CD14-positive monocyte (primary cell): ENCODE measurements at regions of chr6 and their contacts with region 1.

Region 1: DNA sequence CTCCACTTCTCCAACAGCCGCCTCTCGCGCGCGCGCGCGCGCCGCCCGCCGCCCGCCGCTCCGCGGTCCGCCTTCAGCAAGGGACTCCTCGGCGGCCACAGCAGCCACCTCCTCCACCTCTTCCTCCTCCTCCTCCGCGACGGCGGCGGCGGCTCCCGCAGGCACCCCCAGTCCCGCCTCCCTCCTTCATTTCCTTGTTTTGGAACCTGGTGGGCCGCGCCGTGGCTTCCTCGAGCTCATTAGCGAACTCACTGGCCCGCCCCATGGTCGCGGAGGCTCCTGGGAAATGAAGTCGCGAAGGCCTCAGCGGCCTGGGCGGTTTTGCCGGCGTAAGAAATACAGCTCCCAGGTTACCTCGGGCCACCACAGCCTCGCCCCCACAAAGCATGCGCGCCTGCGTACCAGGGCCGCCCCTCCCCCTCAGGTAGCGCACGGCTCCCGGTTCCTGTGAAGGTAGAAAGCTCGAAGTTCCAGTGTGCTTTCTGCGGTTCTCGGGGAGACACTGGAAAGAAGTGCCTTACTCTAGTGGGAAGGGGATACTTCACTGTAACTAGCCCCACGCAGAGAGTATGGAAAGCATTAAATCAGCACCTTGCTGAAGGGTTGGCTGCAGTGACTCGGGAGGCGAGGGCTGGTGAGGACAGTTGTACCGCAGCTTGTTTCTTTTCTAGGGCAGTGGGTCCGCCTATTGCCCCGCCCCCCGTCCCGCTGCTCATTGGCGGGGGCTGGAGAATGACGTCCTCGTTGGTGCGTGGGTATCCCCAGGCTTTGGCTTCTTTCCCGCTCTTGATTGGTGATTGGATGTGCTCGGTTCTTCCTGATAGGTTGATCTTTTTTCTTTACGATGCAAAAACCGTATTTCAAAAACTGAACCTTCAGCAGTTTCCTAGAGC is at the start of gene CDK19:
- DNase-seq: peak; percentile 98
- H3K4me3 ChIP-seq: peak within 1 kb of the TSS; percentile 79 to 94 (median 88)
- H3K4me3 Mint-ChIP-seq: peak within 1 kb of the TSS; percentile 98 to 100
- H3K27ac ChIP-seq: peak within 1 kb of the TSS; percentile 93 to 97
- H3K27ac Mint-ChIP-seq: peak within 1 kb of the TSS; percentile 98 to 100 (median 99)
- H3K4me1 ChIP-seq: peaks cover 25 to 38% of the 10 kb centered on the region in 2 donors
- H3K4me1 Mint-ChIP-seq: peaks cover 43% of the 10 kb centered on the region
- H3K27me3 ChIP-seq: no peaks in the 10 kb centered on the region
- H3K27me3 Mint-ChIP-seq: peaks cover 0 to 2% (median 0%) of the 10 kb centered on the region in 3 donors
- CTCF ChIP-seq: no peak
- polyA plus RNA-seq, gene CDK19: 2.7 to 12.0 (median 3.9) TPM

Region 2: DNA sequence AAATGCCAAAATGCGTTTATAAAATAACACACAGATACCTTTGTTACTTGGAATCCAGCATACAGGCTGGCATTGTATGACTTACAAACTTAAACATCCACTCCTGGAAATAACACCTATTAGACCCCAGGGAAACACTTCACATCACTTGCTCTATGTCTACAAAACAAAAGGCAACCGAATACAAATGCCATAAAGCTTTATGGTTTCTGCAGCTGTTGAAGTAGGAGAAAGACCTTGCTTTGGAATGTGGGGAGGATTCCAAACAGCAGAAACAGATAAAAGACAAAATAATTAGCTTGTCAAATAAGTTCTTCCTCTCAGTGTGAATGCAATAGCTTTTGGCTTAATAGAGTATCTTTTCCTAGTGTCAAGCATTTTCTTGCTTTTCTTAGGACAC is 49.4 kb after region 1 on chr6:
- intact Hi-C with region 1: loop called in 1 of 2 experiments (anchors 5 kb)
- DNase-seq: no peak
- H3K4me3 ChIP-seq: no peak overlapping the region
- H3K4me3 Mint-ChIP-seq: no peak overlapping the region
- H3K27ac ChIP-seq: no peak overlapping the region
- H3K27ac Mint-ChIP-seq: no peak overlapping the region
- H3K4me1 ChIP-seq: peaks cover 27 to 38% of the 10 kb centered on the region in 2 donors
- H3K4me1 Mint-ChIP-seq: peaks cover 22% of the 10 kb centered on the region
- H3K27me3 ChIP-seq: no peaks in the 10 kb centered on the region
- H3K27me3 Mint-ChIP-seq: peaks cover 0 to 5% (median 0%) of the 10 kb centered on the region in 3 donors
- CTCF ChIP-seq: no peak

Region 3: DNA sequence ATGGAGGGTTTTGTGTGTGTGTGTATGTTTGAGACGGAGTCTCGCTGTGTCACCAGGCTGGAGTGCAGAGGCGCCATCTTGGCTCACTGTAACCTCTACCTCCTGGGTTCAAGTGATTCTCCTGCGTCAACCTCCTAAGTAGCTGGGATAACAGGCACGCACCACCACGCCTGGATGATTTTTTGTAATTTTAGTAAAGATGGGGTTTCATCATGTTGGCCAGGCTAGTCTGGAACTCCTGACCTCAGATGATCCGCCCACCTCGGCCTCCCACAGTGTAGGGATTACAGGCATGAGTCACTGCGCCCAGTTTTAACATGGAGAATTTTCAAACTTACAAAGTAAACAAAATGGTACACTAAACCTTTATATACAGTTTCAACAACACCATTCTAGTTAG is 82.0 kb after region 1 on chr6:
- intact Hi-C with region 1: no loop called
- DNase-seq: no peak
- H3K4me3 ChIP-seq: no peak overlapping the region
- H3K4me3 Mint-ChIP-seq: no peak overlapping the region
- H3K27ac ChIP-seq: no peak overlapping the region
- H3K27ac Mint-ChIP-seq: peak overlapping the region in 4 of 7 donors; percentile 1 to 73 (median 40)
- H3K4me1 ChIP-seq: no peaks in the 10 kb centered on the region
- H3K4me1 Mint-ChIP-seq: no peaks in the 10 kb centered on the region
- H3K27me3 ChIP-seq: no peaks in the 10 kb centered on the region
- H3K27me3 Mint-ChIP-seq: no peaks in the 10 kb centered on the region
- CTCF ChIP-seq: no peak